ENCODE measurements at regions of chr10 and their contacts with region 1.

Region 1: DNA sequence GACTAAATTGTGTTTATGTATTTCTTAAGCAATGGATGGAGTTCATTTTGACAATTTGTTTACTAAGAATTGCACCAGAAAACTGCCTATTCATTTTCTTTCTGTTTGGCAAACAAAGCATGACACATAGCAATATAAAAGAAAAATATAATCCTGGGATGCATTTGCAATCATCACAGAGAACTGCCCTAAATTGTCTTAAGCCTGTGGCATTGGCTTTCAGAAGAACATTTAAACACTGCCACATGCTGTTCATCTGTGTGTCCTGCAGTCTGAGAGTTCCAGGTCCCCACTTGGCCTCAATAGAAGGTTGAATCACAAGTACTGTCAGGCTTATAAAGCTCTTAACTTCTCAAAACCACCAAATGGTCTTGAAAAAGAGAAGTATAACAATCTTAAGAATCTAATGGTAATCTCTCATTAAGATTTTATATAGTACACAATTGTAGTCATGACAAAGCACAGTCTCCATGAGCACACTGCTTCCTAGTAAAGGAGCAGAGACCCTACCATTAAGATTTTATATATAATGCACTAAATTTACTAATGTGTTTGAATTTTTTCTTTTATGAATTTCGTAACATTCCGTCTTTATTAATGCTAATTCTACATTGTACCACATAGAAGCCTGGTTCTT is 29.9 kb downstream of the RNLS start:
- DNase-seq: peak; percentile 26 to 75
- ATAC-seq: peak; percentile 94 to 97
- H3K4me3 ChIP-seq: no peak overlapping the region
- H3K27ac ChIP-seq: no peak overlapping the region
- H3K4me1 ChIP-seq: peaks cover 10% of the 10 kb centered on the region
- CTCF ChIP-seq: peak; percentile 89
- EP300 ChIP-seq: no peak
- POLR2A ChIP-seq: no peak
- RAD21 ChIP-seq: peak; percentile 89 to 90

Region 2: DNA sequence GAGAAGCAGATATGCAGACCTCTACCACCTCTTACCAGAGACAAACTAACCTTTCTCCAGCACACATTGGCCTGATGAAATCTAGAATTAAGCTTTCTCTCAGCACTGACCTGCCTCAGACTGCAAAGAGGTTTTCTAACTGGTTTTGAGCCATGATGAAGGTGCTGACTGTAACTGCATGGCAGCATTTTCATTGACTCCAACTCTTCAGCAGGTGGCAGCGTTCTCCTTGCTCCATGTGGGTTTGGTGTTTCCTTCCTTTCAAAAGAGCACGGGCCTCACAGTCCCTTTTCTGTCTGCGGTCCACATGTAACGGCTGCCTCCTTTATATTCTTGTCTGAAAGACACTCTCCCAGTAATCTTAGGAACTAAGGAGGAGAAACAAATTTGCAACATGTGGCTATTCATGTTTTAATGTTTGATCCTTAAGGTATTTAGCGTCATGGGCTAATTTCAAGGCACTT is 702.5 kb before region 1 on chr10:
- CTCF ChIA-PET with region 1: interaction called, 24 read pairs
- POLR2A ChIA-PET with region 1: no interaction called
- DNase-seq: peak; percentile 63 to 83
- ATAC-seq: peak; percentile 89 to 92
- H3K4me3 ChIP-seq: no peak overlapping the region
- H3K27ac ChIP-seq: peak overlapping the region in 1 of 2 experiments; percentile 58; a peak in 3 of 6 replicates
- H3K4me1 ChIP-seq: peaks cover 29% of the 10 kb centered on the region
- CTCF ChIP-seq: peak; percentile 64
- EP300 ChIP-seq: no peak
- POLR2A ChIP-seq: no peak
- RAD21 ChIP-seq: peak; percentile 82 to 87

Region 3: GRCh38 chr10:88343761-88344484 is 209.3 kb before region 1 on chr10:
- CTCF ChIA-PET with region 1: no interaction called
- POLR2A ChIA-PET with region 1: no interaction called
- DNase-seq: no peak
- ATAC-seq: no peak
- H3K4me3 ChIP-seq: no peak overlapping the region
- H3K27ac ChIP-seq: no peak overlapping the region
- H3K4me1 ChIP-seq: 0 out of 3 replicates have a peak, but pooled peaks cover 6% of the 10 kb centered on the region
- CTCF ChIP-seq: no peak
- EP300 ChIP-seq: no peak
- POLR2A ChIP-seq: no peak
- RAD21 ChIP-seq: no peak

Region 4: GRCh38 chr10:88541116-88541626 is 12.1 kb before region 1 on chr10:
- CTCF ChIA-PET with region 1: interaction called, 14 read pairs
- POLR2A ChIA-PET with region 1: no interaction called
- DNase-seq: no peak
- ATAC-seq: no peak
- H3K4me3 ChIP-seq: no peak overlapping the region
- H3K27ac ChIP-seq: no peak overlapping the region
- H3K4me1 ChIP-seq: no peaks in the 10 kb centered on the region; the same call in 2 of the 3 replicates
- CTCF ChIP-seq: no peak
- EP300 ChIP-seq: no peak
- POLR2A ChIP-seq: no peak
- RAD21 ChIP-seq: no peak

Region 5: GRCh38 chr10:88565072-88565471 is 11.8 kb after region 1 on chr10:
- CTCF ChIA-PET with region 1: interaction called, 24 read pairs
- POLR2A ChIA-PET with region 1: no interaction called
- DNase-seq: peak; percentile 15 to 39
- ATAC-seq: peak; percentile 81 to 89
- H3K4me3 ChIP-seq: no peak overlapping the region
- H3K27ac ChIP-seq: no peak overlapping the region
- H3K4me1 ChIP-seq: peaks cover 10% of the 10 kb centered on the region; the same call in 2 of the 3 replicates
- CTCF ChIP-seq: peak; percentile 64
- EP300 ChIP-seq: no peak
- POLR2A ChIP-seq: no peak
- RAD21 ChIP-seq: peak; percentile 82 to 85